Sciatic nerve (tissue), 2 donors: ENCODE measurements at regions of chr6 and their contacts with region 1.

Region 1: GRCh38 chr6:116087437-116088027 is 13.1 kb upstream of the NT5DC1 start:
- DNase-seq: no peak
- ATAC-seq: no peak

Region 2: DNA sequence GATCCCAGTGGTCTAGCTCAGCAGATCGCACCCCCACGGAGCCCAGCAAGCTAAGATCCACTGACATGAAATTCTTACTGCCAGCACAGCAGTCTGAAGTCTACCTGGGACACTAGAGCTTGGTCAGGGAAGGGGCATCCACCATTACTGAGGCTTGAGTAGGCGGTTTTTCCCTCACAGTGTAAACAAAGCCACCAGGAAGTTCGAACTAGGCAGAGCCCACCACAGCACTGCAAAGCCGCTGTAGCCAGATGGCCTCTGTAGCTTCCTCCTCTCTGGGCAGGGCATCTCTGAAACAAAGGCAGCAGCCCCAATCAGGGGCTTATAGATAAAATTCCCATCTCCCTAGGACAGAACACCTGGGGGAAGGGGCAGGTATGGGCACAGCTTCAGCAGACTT is 45.6 kb before region 1 on chr6:
- intact Hi-C with region 1: loop called (anchors 1 kb)
- DNase-seq: no peak
- ATAC-seq: no peak